CD8-positive, alpha-beta T cell (primary cell): ENCODE measurements at regions of chr4 and their contacts with region 1.

Region 1: GRCh38 chr4:52861879-52862616 is at the start of gene RASL11B:
- DNase-seq: peak; percentile 67 to 89 (median 80)
- ATAC-seq: peak; percentile 99
- H3K4me3 ChIP-seq: peak within 1 kb of the TSS; percentile 52 to 65
- H3K4me3 Mint-ChIP-seq: peak within 1 kb of the TSS; percentile 72
- H3K27ac ChIP-seq: no peak within 1 kb of the TSS
- H3K27ac Mint-ChIP-seq: peak within 1 kb of the TSS; percentile 42
- H3K4me1 ChIP-seq: peaks cover 14% of the 10 kb centered on the region
- H3K4me1 Mint-ChIP-seq: peaks cover 5% of the 10 kb centered on the region
- H3K27me3 ChIP-seq: peaks cover 0 to 6% of the 10 kb centered on the region in 2 experiments
- H3K27me3 Mint-ChIP-seq: peaks cover 33% of the 10 kb centered on the region
- CTCF ChIP-seq: peak; percentile 33
- total RNA-seq, gene RASL11B: 0.64 TPM in 1 of 2 experiments, not detected in the other

Region 2: DNA sequence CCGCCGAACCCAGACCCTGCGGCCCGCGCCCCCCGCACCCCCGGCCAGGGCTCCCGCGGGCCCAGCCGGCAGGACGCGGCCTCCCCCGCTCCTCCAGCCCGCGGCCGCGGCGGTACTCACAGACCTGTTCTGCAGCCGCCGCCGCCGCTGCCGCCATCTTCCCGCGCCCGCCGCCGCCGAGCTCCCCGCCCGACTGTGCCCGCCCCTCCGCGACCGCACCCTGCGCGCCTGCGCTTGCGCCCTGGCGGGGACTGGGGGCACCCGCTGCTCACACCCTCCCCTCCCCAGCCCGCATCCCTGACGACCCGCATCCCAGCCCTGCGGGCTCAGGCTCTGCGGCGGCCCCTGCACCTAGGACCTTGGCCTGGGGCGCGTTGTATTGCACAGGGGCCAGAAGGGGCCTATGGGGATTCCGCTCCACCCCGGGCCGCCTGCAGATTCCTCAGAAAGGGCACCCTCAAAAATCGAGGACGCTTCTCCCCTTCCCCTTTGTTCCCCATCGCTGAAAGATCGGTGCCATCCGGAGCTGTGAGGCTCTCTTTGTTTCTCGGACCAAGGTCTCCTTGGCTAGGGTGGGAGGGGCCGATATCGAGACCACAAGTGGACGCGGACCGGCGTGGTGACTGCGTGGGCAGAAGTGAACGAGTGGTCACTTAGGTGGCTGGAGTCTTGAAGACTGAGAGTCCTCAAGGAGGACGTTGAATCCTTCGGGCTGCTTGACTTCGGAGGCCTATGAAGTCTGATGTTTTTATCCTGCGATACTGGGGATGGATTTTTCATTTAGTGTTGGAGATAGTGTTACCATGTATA is 823.7 kb before region 1 on chr4 and contains the start of gene SGCB:
- CTCF ChIA-PET with region 1: no interaction called
- POLR2A ChIA-PET with region 1: no interaction called
- intact Hi-C with region 1: loop called in 1 of 2 experiments (anchors 5 kb)
- DNase-seq: peak; percentile 29 to 83 (median 72)
- ATAC-seq: peak; percentile 94
- H3K4me3 ChIP-seq: peak within 1 kb of the TSS; percentile 67 to 74
- H3K4me3 Mint-ChIP-seq: peak within 1 kb of the TSS; percentile 85
- H3K27ac ChIP-seq: no peak within 1 kb of the TSS
- H3K27ac Mint-ChIP-seq: peak within 1 kb of the TSS; percentile 19
- H3K4me1 ChIP-seq: peaks cover 14% of the 10 kb centered on the region
- H3K4me1 Mint-ChIP-seq: peaks cover 26% of the 10 kb centered on the region
- H3K27me3 ChIP-seq: no peaks in the 10 kb centered on the region
- H3K27me3 Mint-ChIP-seq: peaks cover 11% of the 10 kb centered on the region
- CTCF ChIP-seq: no peak
- total RNA-seq, gene SGCB: 3.0 to 3.1 TPM

Region 3: DNA sequence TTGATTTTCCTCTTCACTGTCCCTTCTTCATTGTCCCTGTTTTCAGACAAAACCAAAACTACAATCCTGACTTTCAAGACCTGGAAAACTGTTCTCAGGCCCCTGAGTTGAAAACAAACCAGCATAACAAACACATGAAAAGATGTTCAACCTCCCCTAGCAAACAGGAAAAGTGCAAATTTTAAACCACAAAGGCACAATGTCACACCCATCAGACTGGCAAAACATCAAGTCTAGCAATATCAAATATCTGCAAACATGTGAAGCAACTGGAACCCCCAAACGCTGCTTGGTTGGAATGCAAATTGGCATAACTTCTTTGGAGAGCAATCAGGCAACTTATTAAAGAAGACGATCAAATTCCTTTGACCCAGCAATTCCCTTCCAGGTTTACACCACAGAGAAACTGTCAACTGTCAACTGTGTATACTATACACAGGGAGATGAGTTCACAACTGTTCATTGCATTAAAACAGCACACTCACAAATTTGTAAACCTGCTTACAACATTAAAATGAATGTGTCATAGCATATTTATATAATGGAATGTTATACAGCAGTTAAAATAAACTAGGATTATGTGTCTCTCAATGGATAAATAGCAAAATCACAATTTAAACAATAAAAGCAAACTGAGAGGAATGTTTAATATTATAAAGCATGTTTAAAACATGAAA is 209.9 kb before region 1 on chr4:
- CTCF ChIA-PET with region 1: no interaction called
- POLR2A ChIA-PET with region 1: no interaction called
- intact Hi-C with region 1: loop called in 1 of 2 experiments (anchors 5 kb)
- DNase-seq: no peak
- ATAC-seq: no peak
- H3K4me3 ChIP-seq: no peak overlapping the region
- H3K4me3 Mint-ChIP-seq: no peak overlapping the region
- H3K27ac ChIP-seq: no peak overlapping the region
- H3K27ac Mint-ChIP-seq: no peak overlapping the region
- H3K4me1 ChIP-seq: no peaks in the 10 kb centered on the region
- H3K4me1 Mint-ChIP-seq: peaks cover 13% of the 10 kb centered on the region
- H3K27me3 ChIP-seq: no peaks in the 10 kb centered on the region
- H3K27me3 Mint-ChIP-seq: peaks cover 4% of the 10 kb centered on the region
- CTCF ChIP-seq: no peak

Region 4: DNA sequence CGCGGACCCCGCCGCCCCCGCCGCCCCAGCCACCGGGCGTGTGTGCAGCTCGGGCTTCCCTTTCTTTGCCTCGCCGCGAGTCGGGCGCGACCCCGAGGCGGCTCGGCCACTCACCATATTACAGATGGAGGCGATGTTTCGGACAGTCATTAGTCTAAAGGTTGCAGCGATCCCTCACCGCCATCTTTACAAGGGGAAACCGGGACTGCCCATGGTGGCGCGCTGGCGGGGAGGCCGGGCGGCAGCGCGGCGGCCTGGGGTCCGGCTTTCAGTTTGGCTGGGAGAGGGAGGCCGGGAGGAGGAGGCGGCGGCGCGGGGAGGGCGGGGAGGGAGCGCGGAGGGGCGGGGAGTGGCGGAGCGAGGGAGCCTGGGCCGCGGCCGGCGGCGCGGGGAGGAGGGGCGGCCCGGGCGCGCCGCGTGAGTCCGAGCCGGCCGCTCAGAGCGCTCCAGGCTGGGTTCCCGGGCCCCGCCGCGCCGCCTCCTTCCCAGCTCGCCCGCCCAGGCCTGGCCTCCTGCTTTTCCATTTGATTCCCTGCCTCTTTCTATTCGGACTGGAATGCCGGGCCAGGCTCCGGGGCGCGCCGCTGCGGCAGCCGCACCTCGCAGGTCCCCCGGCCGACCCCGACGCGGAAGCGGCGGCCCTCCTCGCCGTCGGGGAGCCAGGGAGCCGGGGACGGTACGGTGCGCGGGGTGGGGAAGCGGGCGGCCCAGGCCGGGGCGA is 202.9 kb before region 1 on chr4 and contains the start of gene USP46:
- CTCF ChIA-PET with region 1: no interaction called
- POLR2A ChIA-PET with region 1: no interaction called
- intact Hi-C with region 1: loop called (anchors 5 kb)
- DNase-seq: peak in 8 of 9 experiments; percentile 25 to 70 (median 42)
- ATAC-seq: peak; percentile 77
- H3K4me3 ChIP-seq: peak within 1 kb of the TSS; percentile 66 to 67
- H3K4me3 Mint-ChIP-seq: peak within 1 kb of the TSS; percentile 82
- H3K27ac ChIP-seq: peak within 1 kb of the TSS in 1 of 2 experiments; percentile 22
- H3K27ac Mint-ChIP-seq: peak within 1 kb of the TSS; percentile 76
- H3K4me1 ChIP-seq: no peaks in the 10 kb centered on the region
- H3K4me1 Mint-ChIP-seq: peaks cover 21% of the 10 kb centered on the region
- H3K27me3 ChIP-seq: no peaks in the 10 kb centered on the region
- H3K27me3 Mint-ChIP-seq: peaks cover 31% of the 10 kb centered on the region
- CTCF ChIP-seq: no peak
- total RNA-seq, gene USP46: 3.1 to 4.5 TPM

Region 5: DNA sequence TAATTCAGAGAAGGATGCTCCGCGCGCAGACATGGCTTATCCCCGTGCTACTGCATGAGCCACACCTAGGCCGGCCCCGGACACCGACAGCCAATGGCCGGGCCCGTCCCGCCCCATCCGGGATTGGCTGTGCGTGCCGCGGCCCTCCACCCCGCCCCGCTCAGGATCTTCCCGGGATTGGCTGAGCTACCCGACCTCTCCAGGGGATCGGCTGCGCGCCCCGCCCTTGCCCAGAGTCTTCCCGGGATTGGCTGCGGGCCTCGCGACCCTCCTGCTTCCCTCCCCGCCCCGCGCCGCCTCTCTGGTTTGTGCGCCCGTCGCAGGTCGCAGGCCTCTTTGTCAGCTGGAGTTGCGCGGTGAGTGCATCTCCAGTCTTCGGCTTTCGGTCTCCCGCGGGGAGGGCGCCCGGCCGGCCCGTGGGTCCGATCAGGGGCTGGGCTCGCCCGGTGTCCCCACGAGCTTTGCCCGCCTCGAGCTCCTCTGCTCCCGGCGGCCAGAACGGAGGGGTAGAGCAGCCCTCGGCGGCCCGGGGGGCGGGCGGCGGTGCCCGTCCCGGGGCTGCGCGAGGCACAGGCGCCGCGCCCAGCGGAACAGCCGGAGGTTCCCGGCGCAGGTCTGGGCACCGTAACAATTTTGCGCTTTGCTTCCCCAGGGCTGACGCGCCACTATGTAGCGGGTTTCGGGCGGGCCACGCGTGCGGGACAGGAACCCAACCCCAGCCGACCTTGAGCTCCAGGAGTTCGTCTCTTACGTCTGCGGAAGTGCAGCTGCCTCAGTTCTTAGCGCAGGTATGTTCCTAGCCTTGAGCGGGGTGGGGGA is 149.7 kb before region 1 on chr4:
- CTCF ChIA-PET with region 1: no interaction called
- POLR2A ChIA-PET with region 1: interaction called, 3 read pairs
- intact Hi-C with region 1: loop called (anchors 1 to 5 kb)
- DNase-seq: peak; percentile 90 to 97 (median 95)
- ATAC-seq: peak; percentile 89
- H3K4me3 ChIP-seq: peak overlapping the region; percentile 58 to 76
- H3K4me3 Mint-ChIP-seq: peak overlapping the region; percentile 92
- H3K27ac ChIP-seq: peak overlapping the region; percentile 82 to 89
- H3K27ac Mint-ChIP-seq: peak overlapping the region; percentile 96
- H3K4me1 ChIP-seq: peaks cover 29% of the 10 kb centered on the region
- H3K4me1 Mint-ChIP-seq: peaks cover 43% of the 10 kb centered on the region
- H3K27me3 ChIP-seq: no peaks in the 10 kb centered on the region
- H3K27me3 Mint-ChIP-seq: no peaks in the 10 kb centered on the region
- CTCF ChIP-seq: no peak

Region 6: GRCh38 chr4:52721968-52722815 is 139.9 kb before region 1 on chr4:
- CTCF ChIA-PET with region 1: no interaction called
- POLR2A ChIA-PET with region 1: no interaction called
- intact Hi-C with region 1: loop called in 1 of 2 experiments (anchors 1 kb)
- DNase-seq: peak; percentile 74 to 97 (median 89)
- ATAC-seq: peak; percentile 97
- H3K4me3 ChIP-seq: peak overlapping the region; percentile 76 to 87
- H3K4me3 Mint-ChIP-seq: peak overlapping the region; percentile 85
- H3K27ac ChIP-seq: peak overlapping the region; percentile 67 to 90
- H3K27ac Mint-ChIP-seq: peak overlapping the region; percentile 90
- H3K4me1 ChIP-seq: peaks cover 9% of the 10 kb centered on the region
- H3K4me1 Mint-ChIP-seq: peaks cover 11% of the 10 kb centered on the region
- H3K27me3 ChIP-seq: no peaks in the 10 kb centered on the region
- H3K27me3 Mint-ChIP-seq: peaks cover 5% of the 10 kb centered on the region
- CTCF ChIP-seq: no peak